ENCODE measurements at regions of chr17 and their contacts with region 1.

Region 1: DNA sequence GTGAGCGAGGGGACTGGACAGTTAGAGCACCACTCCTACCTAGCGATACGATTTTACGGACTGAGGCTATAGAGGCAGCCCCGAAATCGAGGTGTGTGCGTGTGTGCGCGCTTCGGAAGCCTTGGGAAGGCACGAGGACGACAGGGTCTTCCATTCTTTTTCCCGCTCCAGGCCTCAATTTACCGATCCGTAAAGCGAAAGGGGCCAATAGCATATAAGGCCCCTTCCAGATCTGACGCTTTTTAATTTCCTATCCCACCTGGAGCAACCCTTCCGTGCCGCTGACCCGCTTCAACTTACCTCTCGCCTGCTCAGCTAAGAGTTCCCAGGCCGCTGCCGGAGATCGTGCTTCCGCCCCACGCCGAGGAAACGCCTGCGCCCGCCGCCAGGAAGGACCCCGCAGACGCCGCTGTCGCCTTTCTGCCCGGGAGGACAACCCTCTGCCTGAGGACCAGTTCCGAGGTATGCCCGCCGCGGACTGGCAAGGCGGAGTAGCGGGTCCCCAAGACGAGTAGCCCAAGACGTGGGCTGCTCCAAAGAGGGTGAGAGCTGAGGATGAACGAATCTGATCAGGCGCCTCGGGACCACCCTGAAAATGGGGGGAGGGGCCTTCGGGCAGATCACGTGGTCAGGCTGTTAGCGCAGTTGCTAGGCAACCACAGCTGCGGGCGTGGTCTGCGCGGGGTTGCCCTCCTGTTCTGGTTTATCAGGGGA is at the start of gene EFTUD2:
- DNase-seq: peak; percentile 93
- H3K4me3 ChIP-seq: peak within 1 kb of the TSS; percentile 67 to 97 (median 73)
- H3K27ac ChIP-seq: peak within 1 kb of the TSS; percentile 96
- H3K4me1 ChIP-seq: peaks cover 37% of the 10 kb centered on the region
- H3K27me3 ChIP-seq: no peaks in the 10 kb centered on the region
- CTCF ChIP-seq: no peak
- POLR2A ChIP-seq: peak; percentile 87
- total RNA-seq, gene EFTUD2: 170 and 171 TPM in 2 replicates

Region 2: GRCh38 chr17:44911133-44912001 is 12.1 kb after region 1 on chr17:
- CTCF ChIA-PET with region 1: interaction called, 94 read pairs
- POLR2A ChIA-PET with region 1: no interaction called
- dilution Hi-C with region 1: no loop called
- intact Hi-C with region 1: no loop called
- DNase-seq: peak; percentile 36
- H3K4me3 ChIP-seq: no peak overlapping the region
- H3K27ac ChIP-seq: no peak overlapping the region
- H3K4me1 ChIP-seq: peaks cover 10% of the 10 kb centered on the region
- H3K27me3 ChIP-seq: no peaks in the 10 kb centered on the region
- CTCF ChIP-seq: peak; percentile 23 to 59
- POLR2A ChIP-seq: no peak